ENCODE measurements at regions of chr4 and their contacts with region 1.

Region 1: DNA sequence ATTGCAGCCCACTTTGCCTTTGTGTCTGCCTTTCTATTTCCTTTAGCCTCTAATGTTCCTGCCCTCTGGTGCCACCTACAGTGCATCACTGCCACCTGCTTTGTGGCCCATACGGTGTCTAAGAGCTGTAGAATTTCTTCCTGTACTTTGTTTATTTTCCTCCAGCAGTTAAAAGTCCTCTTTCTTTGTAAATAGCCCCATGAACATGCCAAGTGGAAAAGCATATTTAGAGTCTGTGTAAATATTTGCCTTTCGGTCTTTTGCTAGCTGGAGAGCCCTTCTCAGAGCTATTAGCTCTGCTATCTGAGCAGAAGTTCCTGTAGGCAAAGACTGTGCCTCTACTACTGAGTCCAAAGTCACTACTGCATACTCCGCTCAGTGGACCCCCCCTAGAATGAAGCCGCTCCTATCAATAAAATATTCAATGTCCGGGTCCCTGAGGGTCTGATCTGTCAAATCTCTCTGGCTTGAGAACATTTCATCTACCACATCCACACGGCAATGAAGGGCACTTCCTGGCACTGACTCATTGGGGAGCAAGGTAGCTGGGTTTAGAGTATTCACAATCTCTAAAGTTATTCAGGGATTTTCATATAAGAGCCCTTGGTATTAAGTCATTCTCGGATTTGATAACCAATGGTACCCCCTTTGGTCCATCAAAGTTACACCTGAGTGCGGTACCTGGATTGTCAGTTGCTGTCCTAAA is 36.3 kb downstream of the SULT1E1 start:
- DNase-seq: peak; percentile 64 to 82 (median 74)
- ATAC-seq: peak; percentile 99
- H3K4me3 ChIP-seq: no peak overlapping the region
- H3K27ac ChIP-seq: peak overlapping the region in 2 of 3 donors; percentile 38 to 85
- H3K4me1 ChIP-seq: peaks cover 0 to 7% (median 0%) of the 10 kb centered on the region in 4 donors
- H3K27me3 ChIP-seq: no peaks in the 10 kb centered on the region
- CTCF ChIP-seq: peak; percentile 67 to 84 (median 80)
- POLR2A ChIP-seq: no peak

Region 2: GRCh38 chr4:69563424-69563823 is 260.2 kb before region 1 on chr4:
- intact Hi-C with region 1: no loop called
- DNase-seq: no peak
- ATAC-seq: no peak
- H3K4me3 ChIP-seq: no peak overlapping the region
- H3K27ac ChIP-seq: no peak overlapping the region
- H3K4me1 ChIP-seq: peaks cover 0 to 4% (median 0%) of the 10 kb centered on the region in 4 donors
- H3K27me3 ChIP-seq: no peaks in the 10 kb centered on the region
- CTCF ChIP-seq: no peak
- POLR2A ChIP-seq: no peak

Region 3: DNA sequence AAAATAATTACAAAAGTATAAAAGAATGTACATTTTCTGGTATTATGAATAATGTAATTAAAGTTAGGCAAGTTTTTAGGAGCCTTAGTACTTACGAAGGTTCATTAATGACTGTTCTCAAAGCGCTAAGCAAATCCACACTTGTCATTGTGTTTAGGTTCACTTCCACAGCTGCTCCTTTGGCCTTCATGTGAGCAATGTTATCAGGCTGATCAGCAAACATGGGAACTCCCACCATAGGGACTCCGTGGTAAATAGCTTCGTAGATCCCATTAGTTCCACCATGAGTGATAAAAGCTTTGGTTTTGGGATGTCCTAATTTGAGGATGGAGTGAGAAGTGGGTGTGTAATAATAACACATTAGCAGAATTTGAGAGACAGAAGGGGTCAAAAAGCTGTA is 229.3 kb before region 1 on chr4:
- intact Hi-C with region 1: no loop called
- DNase-seq: no peak
- ATAC-seq: peak; percentile 50 to 73 (median 68)
- H3K4me3 ChIP-seq: no peak overlapping the region
- H3K27ac ChIP-seq: peak overlapping the region; percentile 13 to 39 (median 38)
- H3K4me1 ChIP-seq: peaks cover 0 to 12% (median 0%) of the 10 kb centered on the region in 4 donors
- H3K27me3 ChIP-seq: no peaks in the 10 kb centered on the region
- CTCF ChIP-seq: no peak
- POLR2A ChIP-seq: no peak

Region 4: GRCh38 chr4:69760455-69760854 is 63.2 kb before region 1 on chr4 and contains the start of gene SULT1B1:
- intact Hi-C with region 1: loop called in 1 of 2 experiments (anchors 10 kb)
- DNase-seq: peak; percentile 38 to 80 (median 60)
- ATAC-seq: peak; percentile 84 to 93 (median 89)
- H3K4me3 ChIP-seq: peak within 1 kb of the TSS; percentile 13 to 29 (median 21)
- H3K27ac ChIP-seq: peak within 1 kb of the TSS; percentile 3 to 60 (median 56)
- H3K4me1 ChIP-seq: peaks cover 0 to 40% (median 8%) of the 10 kb centered on the region in 4 donors
- H3K27me3 ChIP-seq: no peaks in the 10 kb centered on the region
- CTCF ChIP-seq: no peak
- POLR2A ChIP-seq: peak; percentile 88
- total RNA-seq, gene SULT1B1: 10.0 to 66.3 (median 31.4) TPM

Region 5: GRCh38 chr4:69999420-69999819 is 175.8 kb after region 1 on chr4:
- intact Hi-C with region 1: no loop called
- DNase-seq: no peak
- ATAC-seq: no peak
- H3K4me3 ChIP-seq: no peak overlapping the region
- H3K27ac ChIP-seq: no peak overlapping the region
- H3K4me1 ChIP-seq: no peaks in the 10 kb centered on the region
- H3K27me3 ChIP-seq: no peaks in the 10 kb centered on the region
- CTCF ChIP-seq: no peak
- POLR2A ChIP-seq: no peak

Measured in right lobe of liver (tissue), 6 donors.